Activated CD8-positive, alpha-beta T cell treated with anti-CD3 and anti-CD28 coated beads for 36 hours (primary cell): ENCODE measurements at regions of chr12 and their contacts with region 1.

Region 1: GRCh38 chr12:77010691-77011548 is 54.4 kb downstream of the E2F7 start:
- DNase-seq: peak; percentile 82
- ATAC-seq: peak; percentile 79
- H3K4me3 Mint-ChIP-seq: no peak overlapping the region
- H3K27ac Mint-ChIP-seq: no peak overlapping the region
- H3K4me1 Mint-ChIP-seq: no peaks in the 10 kb centered on the region
- H3K27me3 Mint-ChIP-seq: peaks cover 10% of the 10 kb centered on the region
- CTCF ChIP-seq: peak; percentile 90

Region 2: GRCh38 chr12:76621582-76622024 is 389.3 kb before region 1 on chr12:
- CTCF ChIA-PET with region 1: interaction called, 25 read pairs
- POLR2A ChIA-PET with region 1: no interaction called
- intact Hi-C with region 1: loop called (anchors 2 kb)
- DNase-seq: peak; percentile 83
- ATAC-seq: peak; percentile 95
- H3K4me3 Mint-ChIP-seq: no peak overlapping the region
- H3K27ac Mint-ChIP-seq: no peak overlapping the region
- H3K4me1 Mint-ChIP-seq: peaks cover 3% of the 10 kb centered on the region
- H3K27me3 Mint-ChIP-seq: peaks cover 2% of the 10 kb centered on the region
- CTCF ChIP-seq: peak; percentile 95

Region 3: DNA sequence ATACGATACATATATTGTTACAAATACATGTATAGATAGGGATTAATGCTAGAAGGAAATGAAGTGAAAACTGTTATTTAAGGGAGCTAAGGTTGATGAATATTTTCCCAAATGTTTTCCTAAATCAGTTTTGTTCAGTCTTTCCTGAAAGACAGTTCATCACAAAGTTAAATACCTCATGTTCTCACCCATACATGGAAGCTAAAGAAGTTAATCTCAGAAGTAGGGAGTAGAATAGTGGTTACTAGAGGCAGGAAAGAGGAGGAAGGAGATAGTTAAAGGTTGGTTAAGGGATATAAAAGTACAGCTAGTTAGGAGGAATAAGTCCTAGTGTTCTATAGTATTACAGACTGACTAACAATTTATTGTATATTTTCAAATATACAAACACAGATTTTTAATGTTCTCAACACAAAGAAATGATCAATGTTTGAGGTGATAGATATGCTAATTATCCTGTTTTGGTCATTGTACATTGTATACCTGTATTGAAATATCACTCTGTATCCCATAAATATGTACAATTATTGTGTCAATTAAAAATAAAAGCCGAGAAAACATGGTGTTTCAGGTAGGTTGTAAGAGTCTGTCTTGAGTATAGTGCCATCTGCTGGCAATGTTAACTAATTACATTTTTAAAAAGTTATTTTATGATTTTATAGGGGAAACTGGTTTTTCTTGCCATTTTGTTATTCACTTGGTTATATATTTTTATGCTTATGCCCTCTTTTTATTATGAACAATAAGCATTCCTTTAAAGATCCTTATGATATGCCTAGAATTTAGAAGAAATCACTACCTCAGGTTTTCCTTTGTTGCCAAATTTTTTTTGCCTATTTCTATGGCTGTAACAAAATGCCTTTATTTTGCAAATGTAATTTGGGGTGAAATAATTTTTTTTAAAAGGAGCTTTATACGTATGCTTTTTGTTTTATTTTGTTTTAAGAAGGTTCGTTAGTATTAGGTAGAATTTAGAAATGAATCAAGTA is 220.1 kb before region 1 on chr12:
- CTCF ChIA-PET with region 1: interaction called, 27 read pairs
- POLR2A ChIA-PET with region 1: no interaction called
- intact Hi-C with region 1: no loop called
- DNase-seq: no peak
- ATAC-seq: no peak
- H3K4me3 Mint-ChIP-seq: no peak overlapping the region
- H3K27ac Mint-ChIP-seq: no peak overlapping the region
- H3K4me1 Mint-ChIP-seq: peaks cover 17% of the 10 kb centered on the region
- H3K27me3 Mint-ChIP-seq: no peaks in the 10 kb centered on the region
- CTCF ChIP-seq: peak; percentile 76

Region 4: DNA sequence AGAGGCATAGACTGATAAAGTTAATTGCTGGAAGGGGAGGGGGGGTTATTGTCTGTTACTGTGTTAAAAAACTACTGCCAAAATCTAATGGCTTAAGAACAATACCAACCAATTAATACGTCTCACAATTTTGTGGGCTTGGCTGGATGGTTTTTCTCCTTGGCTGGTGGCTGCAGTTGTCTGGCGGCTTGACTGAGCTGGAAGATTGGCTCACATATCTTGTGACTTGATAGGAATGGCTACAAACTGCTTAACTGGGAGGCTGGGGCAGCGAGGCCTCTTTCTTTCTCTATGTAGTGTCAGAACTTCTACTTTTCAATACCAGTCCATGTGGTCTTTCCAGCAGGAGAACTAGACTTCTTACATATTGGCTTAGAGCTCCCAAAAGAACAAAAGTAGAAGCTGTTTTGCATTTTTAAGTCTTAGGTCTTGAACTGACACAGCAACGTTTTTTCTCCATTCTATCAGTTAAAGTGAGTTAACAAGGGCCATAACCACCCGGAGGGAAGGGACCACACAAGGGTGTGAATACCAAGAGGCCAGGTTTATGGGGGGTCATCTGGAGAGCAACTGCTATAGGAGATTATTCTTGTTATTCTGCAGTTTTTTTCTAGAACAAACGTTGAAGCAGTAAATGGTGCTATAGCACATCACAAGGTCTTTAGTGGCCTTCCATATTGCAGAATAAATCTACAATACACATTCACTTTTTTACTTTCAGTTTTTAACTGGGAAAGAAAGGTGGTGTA is 200.1 kb before region 1 on chr12:
- CTCF ChIA-PET with region 1: interaction called, 12 read pairs
- POLR2A ChIA-PET with region 1: no interaction called
- intact Hi-C with region 1: no loop called
- DNase-seq: no peak
- ATAC-seq: no peak
- H3K4me3 Mint-ChIP-seq: no peak overlapping the region
- H3K27ac Mint-ChIP-seq: no peak overlapping the region
- H3K4me1 Mint-ChIP-seq: no peaks in the 10 kb centered on the region
- H3K27me3 Mint-ChIP-seq: no peaks in the 10 kb centered on the region
- CTCF ChIP-seq: no peak

Region 5: DNA sequence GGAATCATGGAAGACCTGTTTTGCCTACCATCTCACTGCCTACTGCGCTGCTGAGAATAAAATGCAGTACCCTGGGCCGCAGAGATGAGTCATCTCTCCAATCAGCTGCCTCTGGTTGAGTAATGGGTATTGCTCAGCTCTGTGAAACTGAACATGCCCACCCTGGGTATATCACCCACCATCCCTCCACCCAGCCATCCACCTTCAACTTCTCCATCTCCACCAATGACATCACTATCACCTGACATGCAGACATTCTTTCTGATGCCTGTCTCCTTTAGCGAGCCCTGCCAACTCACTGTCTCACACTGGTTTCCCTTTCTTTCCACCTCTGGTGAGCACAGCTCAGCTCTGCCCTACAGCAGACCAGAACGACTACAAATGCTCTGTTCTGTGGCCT is 20.8 kb after region 1 on chr12:
- CTCF ChIA-PET with region 1: interaction called, 13 read pairs
- POLR2A ChIA-PET with region 1: no interaction called
- intact Hi-C with region 1: no loop called
- DNase-seq: peak; percentile 7
- ATAC-seq: no peak
- H3K4me3 Mint-ChIP-seq: no peak overlapping the region
- H3K27ac Mint-ChIP-seq: no peak overlapping the region
- H3K4me1 Mint-ChIP-seq: peaks cover 4% of the 10 kb centered on the region
- H3K27me3 Mint-ChIP-seq: no peaks in the 10 kb centered on the region
- CTCF ChIP-seq: no peak

Region 6: GRCh38 chr12:77049767-77050353 is 38.9 kb after region 1 on chr12:
- CTCF ChIA-PET with region 1: interaction called, 11 read pairs
- POLR2A ChIA-PET with region 1: no interaction called
- intact Hi-C with region 1: no loop called
- DNase-seq: peak; percentile 13
- ATAC-seq: peak; percentile 86
- H3K4me3 Mint-ChIP-seq: no peak overlapping the region
- H3K27ac Mint-ChIP-seq: no peak overlapping the region
- H3K4me1 Mint-ChIP-seq: peaks cover 3% of the 10 kb centered on the region
- H3K27me3 Mint-ChIP-seq: no peaks in the 10 kb centered on the region
- CTCF ChIP-seq: peak; percentile 80